CD8-positive, alpha-beta T cell (primary cell): ENCODE measurements at regions of chr18 and their contacts with region 1.

Region 1: DNA sequence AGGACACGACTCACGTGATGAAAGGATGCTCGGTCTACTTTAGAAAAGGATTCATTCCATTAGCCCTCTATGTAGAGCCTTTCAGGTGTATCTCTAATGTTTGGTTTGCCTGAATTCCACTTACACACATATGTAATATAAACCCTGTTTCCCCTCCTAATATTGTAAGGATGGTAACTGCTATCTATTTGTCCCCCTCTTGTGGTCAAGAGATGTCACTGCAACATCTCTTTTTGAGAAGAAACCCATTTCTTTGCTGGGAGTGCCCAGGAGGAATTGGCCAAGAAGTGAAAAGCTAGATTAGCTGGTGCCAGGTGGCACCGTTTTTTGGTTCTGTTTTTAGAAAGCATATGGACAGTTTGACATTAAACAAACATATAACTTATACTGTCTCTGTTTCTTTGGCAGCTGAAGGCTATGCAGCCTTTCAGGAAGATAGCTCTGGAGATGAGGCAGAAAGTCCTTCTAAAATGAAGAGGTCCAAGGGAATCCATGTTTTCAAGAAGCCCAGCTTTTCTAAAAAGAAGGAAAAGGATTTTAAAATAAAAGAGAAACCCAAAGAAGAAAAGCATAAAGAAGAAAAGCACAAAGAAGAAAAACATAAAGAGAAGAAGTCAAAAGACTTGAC is 41.2 kb downstream of the RALBP1 start:
- DNase-seq: peak in 2 of 9 experiments; percentile 45 to 61
- ATAC-seq: peak; percentile 73
- H3K4me3 ChIP-seq: no peak overlapping the region
- H3K4me3 Mint-ChIP-seq: no peak overlapping the region
- H3K27ac ChIP-seq: no peak overlapping the region
- H3K27ac Mint-ChIP-seq: no peak overlapping the region
- H3K4me1 ChIP-seq: no peaks in the 10 kb centered on the region
- H3K4me1 Mint-ChIP-seq: peaks cover 12% of the 10 kb centered on the region
- H3K27me3 ChIP-seq: no peaks in the 10 kb centered on the region
- H3K27me3 Mint-ChIP-seq: no peaks in the 10 kb centered on the region
- CTCF ChIP-seq: peak; percentile 90

Region 2: GRCh38 chr18:9066817-9067306 is 449.7 kb before region 1 on chr18:
- CTCF ChIA-PET with region 1: interaction called, 43 read pairs
- POLR2A ChIA-PET with region 1: no interaction called
- intact Hi-C with region 1: no loop called
- DNase-seq: no peak
- ATAC-seq: no peak
- H3K4me3 ChIP-seq: no peak overlapping the region
- H3K4me3 Mint-ChIP-seq: no peak overlapping the region
- H3K27ac ChIP-seq: no peak overlapping the region
- H3K27ac Mint-ChIP-seq: no peak overlapping the region
- H3K4me1 ChIP-seq: no peaks in the 10 kb centered on the region
- H3K4me1 Mint-ChIP-seq: no peaks in the 10 kb centered on the region
- H3K27me3 ChIP-seq: no peaks in the 10 kb centered on the region
- H3K27me3 Mint-ChIP-seq: no peaks in the 10 kb centered on the region
- CTCF ChIP-seq: no peak

Region 3: GRCh38 chr18:9275890-9276289 is 240.7 kb before region 1 on chr18:
- CTCF ChIA-PET with region 1: interaction called, 3 read pairs
- POLR2A ChIA-PET with region 1: interaction called, 3 read pairs
- intact Hi-C with region 1: loop called in 1 of 2 experiments (anchors 10 kb)
- DNase-seq: no peak
- ATAC-seq: no peak
- H3K4me3 ChIP-seq: no peak overlapping the region
- H3K4me3 Mint-ChIP-seq: no peak overlapping the region
- H3K27ac ChIP-seq: no peak overlapping the region
- H3K27ac Mint-ChIP-seq: peak overlapping the region; percentile 27
- H3K4me1 ChIP-seq: no peaks in the 10 kb centered on the region
- H3K4me1 Mint-ChIP-seq: peaks cover 2% of the 10 kb centered on the region
- H3K27me3 ChIP-seq: no peaks in the 10 kb centered on the region
- H3K27me3 Mint-ChIP-seq: no peaks in the 10 kb centered on the region
- CTCF ChIP-seq: no peak

Region 4: GRCh38 chr18:9474983-9475642 is 41.4 kb before region 1 on chr18 and contains the start of gene RALBP1:
- CTCF ChIA-PET with region 1: interaction called, 5 read pairs
- POLR2A ChIA-PET with region 1: interaction called, 3 read pairs
- intact Hi-C with region 1: loop called in 1 of 2 experiments (anchors 5 kb)
- DNase-seq: peak; percentile 96 to 99 (median 97)
- ATAC-seq: peak; percentile 98
- H3K4me3 ChIP-seq: peak within 1 kb of the TSS; percentile 90 to 93
- H3K4me3 Mint-ChIP-seq: peak within 1 kb of the TSS; percentile 98
- H3K27ac ChIP-seq: peak within 1 kb of the TSS; percentile 67 to 86
- H3K27ac Mint-ChIP-seq: peak within 1 kb of the TSS; percentile 97
- H3K4me1 ChIP-seq: peaks cover 9% of the 10 kb centered on the region
- H3K4me1 Mint-ChIP-seq: peaks cover 38% of the 10 kb centered on the region
- H3K27me3 ChIP-seq: no peaks in the 10 kb centered on the region
- H3K27me3 Mint-ChIP-seq: peaks cover 5% of the 10 kb centered on the region
- CTCF ChIP-seq: no peak
- total RNA-seq, gene RALBP1: 5.4 to 7.9 TPM

Region 5: GRCh38 chr18:9506046-9506792 is 10.3 kb before region 1 on chr18:
- CTCF ChIA-PET with region 1: interaction called, 20 read pairs
- POLR2A ChIA-PET with region 1: no interaction called
- intact Hi-C with region 1: no loop called
- DNase-seq: no peak
- ATAC-seq: no peak
- H3K4me3 ChIP-seq: no peak overlapping the region
- H3K4me3 Mint-ChIP-seq: no peak overlapping the region
- H3K27ac ChIP-seq: no peak overlapping the region
- H3K27ac Mint-ChIP-seq: no peak overlapping the region
- H3K4me1 ChIP-seq: peaks cover 3% of the 10 kb centered on the region
- H3K4me1 Mint-ChIP-seq: peaks cover 45% of the 10 kb centered on the region
- H3K27me3 ChIP-seq: no peaks in the 10 kb centered on the region
- H3K27me3 Mint-ChIP-seq: no peaks in the 10 kb centered on the region
- CTCF ChIP-seq: no peak

Region 6: GRCh38 chr18:11034884-11035283 is 1518.3 kb after region 1 on chr18:
- CTCF ChIA-PET with region 1: no interaction called
- POLR2A ChIA-PET with region 1: no interaction called
- intact Hi-C with region 1: no loop called
- DNase-seq: no peak
- ATAC-seq: no peak
- H3K4me3 ChIP-seq: no peak overlapping the region
- H3K4me3 Mint-ChIP-seq: no peak overlapping the region
- H3K27ac ChIP-seq: no peak overlapping the region
- H3K27ac Mint-ChIP-seq: no peak overlapping the region
- H3K4me1 ChIP-seq: no peaks in the 10 kb centered on the region
- H3K4me1 Mint-ChIP-seq: no peaks in the 10 kb centered on the region
- H3K27me3 ChIP-seq: no peaks in the 10 kb centered on the region
- H3K27me3 Mint-ChIP-seq: no peaks in the 10 kb centered on the region
- CTCF ChIP-seq: no peak